Left ventricle myocardium superior (tissue), 1 donor: ENCODE measurements at regions of chr10 and their contacts with region 1.

Region 1: GRCh38 chr10:95841661-95842498 is 65.9 kb upstream of the CC2D2B start:
- DNase-seq: no peak
- ATAC-seq: peak; percentile 69

Region 2: GRCh38 chr10:95485445-95485844 is 356.4 kb before region 1 on chr10:
- intact Hi-C with region 1: no loop called
- DNase-seq: no peak
- ATAC-seq: no peak

Region 3: GRCh38 chr10:95664543-95664942 is 177.3 kb before region 1 on chr10:
- intact Hi-C with region 1: no loop called
- DNase-seq: no peak
- ATAC-seq: peak; percentile 10

Region 4: GRCh38 chr10:95693668-95694534 is 148.0 kb before region 1 on chr10 and contains the start of gene TCTN3:
- intact Hi-C with region 1: loop called (anchors 10 kb)
- DNase-seq: peak; percentile 95
- ATAC-seq: peak; percentile 100
- total RNA-seq, gene TCTN3: 8.2 TPM

Region 5: GRCh38 chr10:96118604-96119450 is 276.9 kb after region 1 on chr10:
- intact Hi-C with region 1: no loop called
- DNase-seq: no peak
- ATAC-seq: no peak